Activated T-helper 2 cell treated with anti-CD3 and anti-CD28 coated beads, Interferon-gamma antibody, Interleukin-2, Interleukin-4, amounts not matched to agents 10 μg/mL and 5 μg/mL and 100 μg/mL, durations not matched to agents 14 hours and 24 hours and 36 hours (primary cell): ENCODE measurements at regions of chr12 and their contacts with region 1.

Region 1: DNA sequence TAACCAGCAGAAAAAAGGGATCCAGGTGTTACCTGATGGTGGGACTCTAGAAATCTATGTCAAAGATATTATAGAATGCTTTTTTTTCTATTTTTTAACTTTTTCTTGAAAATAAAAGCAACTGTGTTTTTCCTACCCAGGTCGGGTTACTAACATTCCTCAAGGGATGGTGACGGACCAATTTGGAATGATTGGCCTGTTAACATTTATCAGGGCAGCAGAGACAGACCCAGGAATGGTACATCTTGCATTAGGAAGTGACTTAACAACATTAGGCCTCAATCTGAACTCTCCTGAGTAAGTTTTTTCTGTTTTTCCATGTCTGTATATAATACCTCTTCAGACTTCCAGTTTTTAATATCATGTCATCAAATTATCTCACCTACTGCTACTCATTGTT is 27.6 kb upstream of the KCNMB4 start:
- DNase-seq: no peak
- H3K4me3 Mint-ChIP-seq: no peak overlapping the region
- H3K27ac Mint-ChIP-seq: no peak overlapping the region
- H3K4me1 Mint-ChIP-seq: peaks cover 2% of the 10 kb centered on the region
- H3K27me3 Mint-ChIP-seq: no peaks in the 10 kb centered on the region

Region 2: GRCh38 chr12:70227911-70228310 is 110.6 kb before region 1 on chr12:
- intact Hi-C with region 1: no loop called
- DNase-seq: no peak
- H3K4me3 Mint-ChIP-seq: no peak overlapping the region
- H3K27ac Mint-ChIP-seq: no peak overlapping the region
- H3K4me1 Mint-ChIP-seq: peaks cover 2% of the 10 kb centered on the region
- H3K27me3 Mint-ChIP-seq: no peaks in the 10 kb centered on the region

Region 3: GRCh38 chr12:70305794-70306193 is 32.7 kb before region 1 on chr12:
- intact Hi-C with region 1: loop called (anchors 5 kb)
- DNase-seq: no peak
- H3K4me3 Mint-ChIP-seq: no peak overlapping the region
- H3K27ac Mint-ChIP-seq: no peak overlapping the region
- H3K4me1 Mint-ChIP-seq: peaks cover 23% of the 10 kb centered on the region
- H3K27me3 Mint-ChIP-seq: no peaks in the 10 kb centered on the region